ENCODE measurements at regions of chr1 and their contacts with region 1.

Region 1: GRCh38 chr1:52365746-52366516 is at the start of gene CC2D1B:
- DNase-seq: peak; percentile 99
- H3K4me3 Mint-ChIP-seq: peak within 1 kb of the TSS; percentile 97
- H3K27ac Mint-ChIP-seq: peak within 1 kb of the TSS; percentile 88
- H3K4me1 Mint-ChIP-seq: peaks cover 46% of the 10 kb centered on the region
- H3K27me3 Mint-ChIP-seq: no peaks in the 10 kb centered on the region
- total RNA-seq, gene CC2D1B: 18.4 to 21.8 TPM

Region 2: GRCh38 chr1:51583532-51583931 is 782.4 kb before region 1 on chr1:
- CTCF ChIA-PET with region 1: no interaction called
- intact Hi-C with region 1: no loop called
- DNase-seq: no peak
- H3K4me3 Mint-ChIP-seq: no peak overlapping the region
- H3K27ac Mint-ChIP-seq: no peak overlapping the region
- H3K4me1 Mint-ChIP-seq: no peaks in the 10 kb centered on the region
- H3K27me3 Mint-ChIP-seq: no peaks in the 10 kb centered on the region

Region 3: DNA sequence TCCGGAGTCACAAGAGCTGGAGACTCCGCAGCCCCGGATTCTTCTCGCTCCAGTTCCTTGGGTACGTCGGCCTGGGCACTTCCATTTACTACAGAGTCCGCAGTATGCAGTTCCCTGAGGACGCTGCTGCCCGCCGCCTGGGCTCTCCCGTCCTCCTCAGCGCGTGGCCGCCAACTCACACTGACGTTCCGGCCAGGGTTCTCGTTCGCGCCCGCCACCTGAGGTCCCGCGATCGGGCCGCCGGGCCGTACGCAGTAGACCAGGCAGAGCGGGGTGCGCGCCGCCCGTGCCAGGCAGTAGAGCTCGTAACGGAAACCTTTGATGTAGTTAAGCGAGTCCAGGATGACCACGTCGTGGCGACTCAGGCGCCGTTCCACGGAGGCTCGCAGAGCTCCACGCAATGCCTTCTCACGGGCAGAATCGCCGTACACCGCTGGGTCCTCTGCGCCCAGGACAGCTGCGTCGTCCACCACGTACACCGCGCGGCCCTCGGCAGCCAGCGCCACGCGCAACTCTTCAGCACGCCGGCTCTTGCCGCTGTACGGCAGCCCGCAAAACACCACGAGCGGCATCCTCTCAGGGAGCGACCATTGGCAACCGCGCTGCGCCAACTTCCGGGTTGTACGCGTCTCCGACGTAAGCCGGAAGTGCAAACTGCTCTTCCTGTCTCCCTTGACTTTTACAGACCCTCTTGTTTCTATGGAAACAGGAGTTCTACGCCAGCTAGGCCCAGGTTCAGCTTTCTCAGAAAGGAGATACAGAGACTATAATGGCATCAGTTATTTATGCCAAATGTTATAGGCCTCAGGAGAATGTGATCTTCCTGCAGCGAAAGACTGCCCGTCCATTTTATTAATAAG is 332.5 kb before region 1 on chr1 and contains the start of gene KTI12:
- CTCF ChIA-PET with region 1: no interaction called
- intact Hi-C with region 1: loop called (anchors 2 kb)
- DNase-seq: peak; percentile 93
- H3K4me3 Mint-ChIP-seq: peak within 1 kb of the TSS; percentile 90
- H3K27ac Mint-ChIP-seq: peak within 1 kb of the TSS; percentile 80
- H3K4me1 Mint-ChIP-seq: peaks cover 29% of the 10 kb centered on the region
- H3K27me3 Mint-ChIP-seq: no peaks in the 10 kb centered on the region
- total RNA-seq, gene KTI12: 7.3 to 7.6 TPM

Region 4: GRCh38 chr1:52141513-52142219 is 224.3 kb before region 1 on chr1 and contains the start of gene ZFYVE9:
- CTCF ChIA-PET with region 1: no interaction called
- intact Hi-C with region 1: loop called (anchors 1 kb)
- DNase-seq: peak; percentile 66
- H3K4me3 Mint-ChIP-seq: peak within 1 kb of the TSS; percentile 84
- H3K27ac Mint-ChIP-seq: peak within 1 kb of the TSS; percentile 68
- H3K4me1 Mint-ChIP-seq: peaks cover 40% of the 10 kb centered on the region
- H3K27me3 Mint-ChIP-seq: no peaks in the 10 kb centered on the region
- total RNA-seq, gene ZFYVE9: 3.0 to 3.5 TPM

Region 5: GRCh38 chr1:52424231-52424636 is 58.3 kb after region 1 on chr1:
- CTCF ChIA-PET with region 1: no interaction called
- intact Hi-C with region 1: loop called (anchors 1 kb)
- DNase-seq: peak; percentile 34
- H3K4me3 Mint-ChIP-seq: peak overlapping the region; percentile 57
- H3K27ac Mint-ChIP-seq: peak overlapping the region; percentile 83
- H3K4me1 Mint-ChIP-seq: peaks cover 51% of the 10 kb centered on the region
- H3K27me3 Mint-ChIP-seq: no peaks in the 10 kb centered on the region

Region 6: GRCh38 chr1:52636721-52637695 is 271.1 kb after region 1 on chr1:
- CTCF ChIA-PET with region 1: interaction called, 3 read pairs
- intact Hi-C with region 1: loop called (anchors 1 kb)
- DNase-seq: peak; percentile 84
- H3K4me3 Mint-ChIP-seq: peak overlapping the region; percentile 73
- H3K27ac Mint-ChIP-seq: peak overlapping the region; percentile 98
- H3K4me1 Mint-ChIP-seq: peaks cover 79% of the 10 kb centered on the region
- H3K27me3 Mint-ChIP-seq: no peaks in the 10 kb centered on the region

Region 7: GRCh38 chr1:52726265-52727113 is 360.6 kb after region 1 on chr1 and contains the start of gene ZYG11B:
- CTCF ChIA-PET with region 1: interaction called, 3 read pairs
- intact Hi-C with region 1: loop called (anchors 1 kb)
- DNase-seq: peak; percentile 91
- H3K4me3 Mint-ChIP-seq: peak within 1 kb of the TSS; percentile 85
- H3K27ac Mint-ChIP-seq: peak within 1 kb of the TSS; percentile 55
- H3K4me1 Mint-ChIP-seq: peaks cover 33% of the 10 kb centered on the region
- H3K27me3 Mint-ChIP-seq: no peaks in the 10 kb centered on the region
- total RNA-seq, gene ZYG11B: 10.7 to 11.6 TPM

Region 8: DNA sequence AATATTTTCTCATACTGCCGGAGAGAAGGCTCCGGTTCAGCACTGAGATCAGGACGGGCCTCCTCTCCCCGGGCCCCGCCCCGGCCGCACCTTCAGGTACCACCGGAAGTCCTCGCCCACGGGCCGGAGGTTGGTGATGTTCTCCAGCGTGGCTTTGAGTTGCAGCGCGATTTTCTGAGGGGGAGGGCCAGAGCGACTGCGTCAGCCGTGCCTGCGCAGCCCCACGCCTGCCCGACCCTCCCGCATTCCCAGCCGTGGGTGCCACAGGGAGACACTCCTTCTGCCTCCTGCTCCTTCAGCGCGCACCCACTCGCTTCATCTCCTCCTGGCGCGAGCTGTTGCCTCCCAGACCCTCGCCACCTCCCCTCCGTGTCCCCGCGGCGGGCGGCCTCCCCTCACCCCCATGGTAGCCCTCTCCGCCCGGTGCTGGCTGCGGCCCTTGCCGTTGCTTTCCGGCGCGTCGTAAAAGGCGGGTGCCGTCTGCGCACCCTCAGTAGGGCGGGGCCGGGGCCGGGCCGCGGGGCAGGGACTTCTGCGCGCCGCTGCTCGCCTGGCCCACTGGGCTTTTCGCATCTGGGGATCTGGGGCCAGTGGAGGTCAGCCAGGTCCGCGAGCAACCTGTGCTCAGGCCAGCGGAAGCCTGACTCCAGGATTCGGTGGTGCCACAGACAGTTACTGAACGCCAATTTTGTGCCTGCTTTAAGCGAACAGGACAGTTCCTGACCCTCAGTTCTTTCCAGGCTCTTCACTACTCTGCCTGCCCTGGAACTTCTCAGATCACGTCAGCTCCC is 854.4 kb after region 1 on chr1 and contains the start of gene CZIB:
- CTCF ChIA-PET with region 1: no interaction called
- intact Hi-C with region 1: loop called (anchors 1 kb)
- DNase-seq: peak; percentile 96
- H3K4me3 Mint-ChIP-seq: peak within 1 kb of the TSS; percentile 91
- H3K27ac Mint-ChIP-seq: peak within 1 kb of the TSS; percentile 95
- H3K4me1 Mint-ChIP-seq: peaks cover 24% of the 10 kb centered on the region
- H3K27me3 Mint-ChIP-seq: no peaks in the 10 kb centered on the region
- total RNA-seq, gene CZIB: 44.4 to 45.6 TPM

Measured in activated naive CD4-positive, alpha-beta T cell treated with anti-CD3 and anti-CD28 coated beads for 36 hours (primary cell).